PC-3 (cell line): ENCODE measurements at regions of chr4 and their contacts with region 1.

Region 1: DNA sequence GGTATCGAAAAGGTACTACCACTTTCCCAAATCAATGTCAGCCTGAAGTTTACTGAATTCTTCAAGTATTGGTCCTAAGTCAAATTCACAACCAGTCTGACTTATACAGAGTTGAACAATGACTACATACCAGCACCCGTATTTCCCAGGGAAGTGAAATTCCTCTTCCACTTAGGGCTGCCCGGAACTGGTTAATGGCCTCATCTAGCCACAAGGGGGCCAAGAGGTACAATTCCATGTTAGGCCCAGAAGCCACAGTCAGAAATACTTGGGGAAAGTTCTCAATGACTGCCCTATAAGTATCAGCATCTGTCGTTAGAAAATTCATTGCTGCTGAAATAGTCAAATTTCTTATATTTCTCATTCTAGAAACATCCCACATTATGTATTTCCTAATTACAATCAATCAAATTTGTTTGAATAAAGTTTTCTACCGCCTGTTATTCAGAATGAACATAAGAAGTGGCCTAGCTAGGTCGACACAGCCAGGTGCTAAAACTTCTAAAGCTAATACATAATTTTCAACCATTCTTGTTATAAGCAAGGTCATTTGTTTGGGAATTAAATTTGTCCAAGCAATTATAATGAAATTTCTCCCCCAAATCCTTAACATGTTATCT is 5.7 kb upstream of the PCDH7 start:
- DNase-seq: peak; percentile 65
- ATAC-seq: no peak
- H3K4me3 ChIP-seq: no peak overlapping the region
- H3K27ac ChIP-seq: no peak overlapping the region
- H3K4me1 ChIP-seq: peaks cover 5% of the 10 kb centered on the region; the same call in 1 of the 2 replicates
- H3K27me3 ChIP-seq: no peaks in the 10 kb centered on the region
- CTCF ChIP-seq: peak; percentile 76

Region 2: DNA sequence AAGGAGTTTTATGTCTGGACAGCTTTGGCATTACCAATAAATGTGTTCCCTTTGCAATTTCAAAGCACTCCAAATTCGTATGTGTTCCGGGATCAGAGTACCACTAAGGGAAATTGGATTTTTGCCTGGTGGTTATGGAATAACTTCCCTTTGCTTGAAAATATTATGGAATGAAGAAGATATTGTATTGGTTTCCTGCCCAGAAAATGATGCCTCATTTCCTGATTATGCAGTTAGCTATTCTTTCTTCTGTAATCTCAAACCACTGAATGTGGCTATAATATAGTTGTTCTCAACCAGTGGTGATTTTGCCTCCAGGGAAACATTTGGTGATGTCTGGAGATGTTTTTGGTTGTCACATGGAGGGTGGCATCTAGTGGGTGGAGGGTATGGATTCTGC is 148.5 kb after region 1 on chr4:
- CTCF ChIA-PET with region 1: no interaction called
- POLR2A ChIA-PET with region 1: no interaction called
- intact Hi-C with region 1: loop called (anchors 5 kb)
- DNase-seq: peak; percentile 22
- ATAC-seq: peak; percentile 22; the same call in 1 of the 2 replicates
- H3K4me3 ChIP-seq: no peak overlapping the region
- H3K27ac ChIP-seq: no peak overlapping the region
- H3K4me1 ChIP-seq: peaks cover 5% of the 10 kb centered on the region; the same call in 1 of the 2 replicates
- H3K27me3 ChIP-seq: no peaks in the 10 kb centered on the region
- CTCF ChIP-seq: no peak

Region 3: DNA sequence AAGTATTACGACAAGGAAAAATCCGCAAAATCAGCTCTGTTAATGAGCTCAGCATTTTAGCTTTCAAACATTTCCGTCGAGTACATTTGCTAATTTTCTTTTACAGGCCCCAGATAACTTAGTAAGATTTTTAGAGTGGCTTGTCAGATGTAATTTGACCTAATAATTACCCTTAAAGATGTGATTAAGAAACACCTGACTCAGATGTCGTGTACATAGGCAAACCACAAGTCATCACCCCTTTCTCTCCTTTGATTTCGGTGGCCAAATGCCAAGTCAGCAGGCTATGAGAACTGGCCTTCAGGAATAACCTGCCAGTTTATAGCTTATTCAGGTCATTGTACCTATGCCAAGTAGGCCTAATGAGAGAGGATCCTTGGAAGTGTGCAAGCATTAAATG is 375.3 kb after region 1 on chr4:
- CTCF ChIA-PET with region 1: no interaction called
- POLR2A ChIA-PET with region 1: no interaction called
- intact Hi-C with region 1: loop called (anchors 5 kb)
- DNase-seq: peak; percentile 94
- ATAC-seq: peak; percentile 84
- H3K4me3 ChIP-seq: peak overlapping the region; percentile 45; the same call in 1 of the 2 replicates
- H3K27ac ChIP-seq: peak overlapping the region; percentile 89
- H3K4me1 ChIP-seq: peaks cover 33% of the 10 kb centered on the region
- H3K27me3 ChIP-seq: no peaks in the 10 kb centered on the region
- CTCF ChIP-seq: no peak

Region 4: DNA sequence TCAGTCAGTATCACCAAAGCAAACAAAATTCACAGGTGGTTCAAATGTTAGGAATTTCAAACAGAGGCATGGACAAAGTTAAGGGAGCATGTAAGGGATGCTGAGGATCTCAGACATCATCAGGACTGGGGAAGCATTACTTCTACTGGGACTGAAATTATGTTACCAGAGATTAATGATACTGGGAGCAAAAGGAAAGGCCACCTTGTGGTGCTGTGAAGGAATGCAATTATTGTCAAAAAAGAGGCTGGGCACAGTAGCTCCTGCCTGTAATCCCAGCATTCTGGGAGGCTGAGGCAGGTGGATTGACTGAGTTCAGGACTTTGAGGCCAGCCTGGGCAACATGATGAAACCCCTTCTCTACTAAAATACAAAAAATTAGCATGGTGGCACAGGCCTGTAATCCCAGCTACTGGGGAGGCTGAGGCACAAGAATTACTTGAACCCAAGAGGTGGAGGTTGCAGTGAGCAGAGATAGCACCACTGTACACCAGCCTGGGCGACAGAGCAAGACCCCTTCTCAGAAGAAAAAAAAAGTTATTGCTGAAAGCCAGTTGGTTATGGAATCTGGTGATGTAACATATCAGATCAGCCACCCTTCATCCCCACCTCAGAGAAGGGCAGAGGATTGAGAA is 959.9 kb after region 1 on chr4:
- CTCF ChIA-PET with region 1: interaction called, 3 read pairs
- POLR2A ChIA-PET with region 1: no interaction called
- intact Hi-C with region 1: loop called (anchors 5 kb)
- DNase-seq: peak; percentile 54
- ATAC-seq: peak; percentile 54; the same call in 1 of the 2 replicates
- H3K4me3 ChIP-seq: no peak overlapping the region
- H3K27ac ChIP-seq: no peak overlapping the region
- H3K4me1 ChIP-seq: no peaks in the 10 kb centered on the region
- H3K27me3 ChIP-seq: no peaks in the 10 kb centered on the region
- CTCF ChIP-seq: peak; percentile 53

Region 5: GRCh38 chr4:32340591-32340990 is 1626.1 kb after region 1 on chr4:
- CTCF ChIA-PET with region 1: no interaction called
- POLR2A ChIA-PET with region 1: no interaction called
- intact Hi-C with region 1: loop called (anchors 10 kb)
- DNase-seq: peak; percentile 31
- ATAC-seq: no peak
- H3K4me3 ChIP-seq: no peak overlapping the region
- H3K27ac ChIP-seq: no peak overlapping the region
- H3K4me1 ChIP-seq: no peaks in the 10 kb centered on the region
- H3K27me3 ChIP-seq: no peaks in the 10 kb centered on the region
- CTCF ChIP-seq: peak; percentile 49